Adrenal gland (tissue), 19 donors: ENCODE measurements at regions of chr5 and their contacts with region 1.

Region 1: DNA sequence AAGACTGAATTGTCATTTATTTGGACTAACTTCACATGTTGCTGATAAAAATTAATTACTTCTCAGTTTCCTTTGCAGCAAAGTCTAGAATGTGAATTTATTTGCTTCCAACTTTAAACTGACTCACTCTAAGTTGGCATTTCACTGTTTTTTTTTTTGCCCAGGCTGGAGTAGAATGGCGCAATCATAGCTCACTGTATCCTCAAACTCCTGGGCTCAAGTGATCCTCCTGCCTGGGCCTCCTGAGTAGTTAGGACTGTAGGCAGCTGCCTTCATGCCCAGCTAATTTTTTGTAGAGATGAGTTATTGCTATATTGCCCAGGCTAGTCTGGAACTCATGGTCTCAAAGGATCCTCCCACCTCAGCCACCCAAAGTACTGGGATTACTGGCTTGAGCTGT is 3.6 kb downstream of the CCNB1 start:
- DNase-seq: no peak
- H3K4me3 ChIP-seq: no peak overlapping the region
- H3K27ac ChIP-seq: no peak overlapping the region
- H3K4me1 ChIP-seq: peaks cover 9 to 10% of the 10 kb centered on the region in 2 donors
- H3K27me3 ChIP-seq: no peaks in the 10 kb centered on the region
- CTCF ChIP-seq: no peak
- POLR2A ChIP-seq: no peak

Region 2: DNA sequence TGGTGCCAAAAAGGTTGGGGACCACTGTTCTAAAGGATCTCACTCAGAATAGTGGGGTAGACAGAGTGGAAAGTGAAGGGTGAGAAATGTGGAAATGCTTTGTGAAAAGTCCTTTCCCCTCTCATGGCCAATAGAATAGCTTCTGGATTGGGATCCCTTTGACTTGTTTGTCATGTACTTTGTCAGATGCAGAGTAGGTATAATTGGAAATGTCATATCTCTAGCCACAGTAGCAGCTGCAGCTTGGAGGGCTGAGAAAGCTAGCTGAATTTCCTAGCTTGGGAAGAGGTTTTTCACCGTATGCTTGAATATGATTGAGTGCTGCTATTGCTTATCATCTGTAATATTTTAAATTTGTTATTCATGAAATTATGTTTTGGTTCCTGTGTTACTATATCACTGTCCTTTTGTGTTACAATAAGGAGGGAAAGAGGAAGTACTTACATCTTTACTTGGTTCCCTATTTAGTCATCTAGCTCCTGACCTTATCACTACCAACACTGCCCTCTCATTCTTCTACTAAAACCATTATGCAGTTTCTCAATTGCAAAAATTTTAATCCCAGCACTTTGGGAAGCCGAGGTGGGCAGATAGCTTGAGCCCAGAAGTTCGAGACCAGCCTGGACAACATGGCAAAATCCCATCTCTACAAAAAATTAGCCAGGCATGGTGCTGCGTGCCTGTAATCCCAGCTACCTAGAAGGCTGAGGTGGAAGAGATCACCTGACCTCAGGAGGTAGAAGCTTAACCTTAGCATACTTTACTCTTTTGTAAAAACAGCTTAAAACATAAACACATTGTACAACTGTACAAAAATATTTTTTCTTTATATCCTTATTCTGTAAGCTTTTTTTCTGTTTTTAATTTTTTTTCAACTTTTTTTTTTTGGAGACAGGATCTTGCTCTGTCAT is 64.3 kb before region 1 on chr5:
- intact Hi-C with region 1: loop called in 1 of 2 experiments (anchors 10 kb)
- DNase-seq: no peak
- H3K4me3 ChIP-seq: no peak overlapping the region
- H3K27ac ChIP-seq: no peak overlapping the region
- H3K4me1 ChIP-seq: no peaks in the 10 kb centered on the region
- H3K27me3 ChIP-seq: no peaks in the 10 kb centered on the region
- CTCF ChIP-seq: no peak
- POLR2A ChIP-seq: no peak